ENCODE measurements at regions of chr5 and their contacts with region 1.

Region 1: DNA sequence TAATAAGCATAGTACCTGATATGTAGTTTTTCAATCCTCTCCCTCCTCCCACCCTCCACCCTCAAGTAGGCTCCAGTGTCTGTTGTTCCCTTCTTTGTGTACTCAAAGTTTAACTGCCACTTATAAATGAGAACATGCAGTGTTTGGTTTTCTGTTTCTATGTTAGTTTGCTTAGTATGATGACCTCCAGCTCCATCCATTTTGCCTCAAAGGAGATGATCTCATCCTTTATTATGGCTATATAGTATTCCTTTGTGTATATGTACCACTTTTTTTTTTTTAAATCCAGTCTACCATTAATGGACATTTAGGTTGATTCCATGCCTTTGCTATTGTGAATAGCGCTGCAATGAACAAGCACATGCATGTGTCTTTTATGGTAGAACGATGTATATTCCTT is 20.5 kb downstream of the POLK start:
- DNase-seq: no peak
- H3K4me3 ChIP-seq: no peak overlapping the region
- H3K27ac ChIP-seq: no peak overlapping the region
- H3K4me1 ChIP-seq: no peaks in the 10 kb centered on the region
- CTCF ChIP-seq: no peak

Region 2: DNA sequence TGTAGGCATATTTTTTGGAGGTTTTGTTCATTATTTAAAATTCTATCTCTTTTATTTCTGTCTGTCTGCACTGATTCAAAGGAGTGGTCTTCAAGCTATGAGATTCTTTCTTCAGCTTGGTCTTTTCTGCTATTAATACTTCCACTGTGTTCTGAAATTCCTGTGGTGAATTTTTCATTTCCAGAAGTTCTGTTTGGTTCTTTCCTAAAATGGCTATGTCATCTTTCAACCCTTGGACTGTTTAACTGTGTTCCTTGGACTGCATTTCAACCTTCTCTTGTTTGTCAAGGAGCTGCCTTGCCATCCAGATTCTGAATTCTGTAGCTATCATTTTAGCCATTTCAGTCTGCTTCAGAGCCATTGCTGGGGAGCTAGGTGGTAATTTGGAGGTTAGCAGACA is 97.1 kb before region 1 on chr5:
- CTCF ChIA-PET with region 1: no interaction called
- POLR2A ChIA-PET with region 1: no interaction called
- intact Hi-C with region 1: no loop called
- DNase-seq: no peak
- H3K4me3 ChIP-seq: no peak overlapping the region
- H3K27ac ChIP-seq: no peak overlapping the region
- H3K4me1 ChIP-seq: no peaks in the 10 kb centered on the region
- CTCF ChIP-seq: no peak

Region 3: DNA sequence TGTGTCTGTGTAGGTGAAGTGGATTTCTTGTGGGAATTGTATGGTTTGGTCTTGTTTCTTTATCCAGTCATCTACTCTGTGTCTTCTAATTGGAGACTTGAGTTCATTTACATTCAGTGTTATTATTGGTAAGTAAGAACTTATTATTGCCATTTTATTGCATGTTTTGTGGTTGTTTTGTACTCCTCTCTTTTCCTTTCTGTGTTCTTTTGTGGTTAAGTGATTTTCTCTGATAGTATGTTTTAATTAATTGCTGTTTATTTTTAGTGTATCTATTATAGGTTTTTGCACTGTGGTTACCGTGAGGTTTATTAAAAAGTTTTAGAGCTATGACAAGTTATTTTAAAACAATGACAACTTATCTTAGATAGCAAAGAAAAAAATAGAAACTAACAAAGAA is 12.4 kb before region 1 on chr5:
- CTCF ChIA-PET with region 1: no interaction called
- POLR2A ChIA-PET with region 1: interaction called, 10 read pairs
- intact Hi-C with region 1: no loop called
- DNase-seq: no peak
- H3K4me3 ChIP-seq: no peak overlapping the region
- H3K27ac ChIP-seq: no peak overlapping the region
- H3K4me1 ChIP-seq: peaks cover 25% of the 10 kb centered on the region
- CTCF ChIP-seq: no peak